ENCODE measurements at regions of chr6 and their contacts with region 1.

Region 1: GRCh38 chr6:30102970-30103874 is 9.7 kb downstream of the TRIM31 start:
- DNase-seq: peak; percentile 81
- H3K4me3 ChIP-seq: no peak overlapping the region
- H3K27ac ChIP-seq: no peak overlapping the region
- H3K4me1 ChIP-seq: peaks cover 16% of the 10 kb centered on the region
- CTCF ChIP-seq: peak; percentile 87

Region 2: GRCh38 chr6:30130887-30131862 is 28.0 kb after region 1 on chr6:
- CTCF ChIA-PET with region 1: interaction called, 3 read pairs
- POLR2A ChIA-PET with region 1: interaction called, 3 read pairs
- intact Hi-C with region 1: loop called (anchors 1 kb)
- DNase-seq: peak; percentile 89
- H3K4me3 ChIP-seq: no peak overlapping the region
- H3K27ac ChIP-seq: no peak overlapping the region
- H3K4me1 ChIP-seq: peaks cover 4% of the 10 kb centered on the region
- CTCF ChIP-seq: peak; percentile 100

Region 3: GRCh38 chr6:30169658-30170614 is 66.7 kb after region 1 on chr6:
- CTCF ChIA-PET with region 1: no interaction called
- POLR2A ChIA-PET with region 1: interaction called, 3 read pairs
- intact Hi-C with region 1: loop called (anchors 2 kb)
- DNase-seq: peak; percentile 53
- H3K4me3 ChIP-seq: no peak overlapping the region
- H3K27ac ChIP-seq: no peak overlapping the region
- H3K4me1 ChIP-seq: no peaks in the 10 kb centered on the region
- CTCF ChIP-seq: peak; percentile 88

Measured in OCI-LY7 (cell line).